ENCODE measurements at regions of chr16 and their contacts with region 1.

Region 1: DNA sequence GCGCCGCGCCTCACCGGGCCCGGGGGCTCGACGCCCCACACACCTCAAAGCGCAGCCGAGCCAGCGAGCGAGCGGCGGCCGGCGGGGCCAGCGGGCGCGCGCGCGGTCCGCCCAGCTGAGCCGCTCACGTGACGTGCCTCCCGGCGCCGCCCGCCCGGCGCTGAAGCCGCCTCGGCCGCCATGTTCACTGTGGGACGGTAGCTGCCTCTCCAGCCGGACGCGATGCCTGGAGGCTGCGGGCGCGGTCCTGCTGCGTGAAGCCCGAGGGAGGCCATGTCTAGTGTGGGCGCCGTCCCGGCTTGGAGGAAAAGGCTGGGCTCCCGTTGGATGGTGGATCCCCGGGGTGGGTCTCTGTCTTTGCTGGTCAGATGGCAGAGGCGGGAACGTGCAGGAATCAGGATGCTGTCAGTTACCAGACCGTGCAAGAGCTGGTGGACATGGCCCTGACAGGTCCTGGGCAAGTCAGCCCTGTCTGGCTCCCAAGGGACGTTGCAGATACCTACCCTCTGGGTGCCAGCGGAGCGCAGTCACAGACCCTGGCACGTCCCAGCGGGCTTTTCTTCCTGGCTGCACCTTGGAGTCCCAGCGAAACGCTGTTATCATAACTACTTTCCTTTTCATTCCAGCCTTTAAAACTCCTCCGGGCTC is at the start of gene USP31:
- DNase-seq: peak; percentile 98
- H3K4me3 Mint-ChIP-seq: peak within 1 kb of the TSS; percentile 95
- H3K27ac Mint-ChIP-seq: peak within 1 kb of the TSS; percentile 96
- H3K4me1 Mint-ChIP-seq: peaks cover 32% of the 10 kb centered on the region
- H3K27me3 Mint-ChIP-seq: peaks cover 22% of the 10 kb centered on the region
- CTCF ChIP-seq: no peak
- total RNA-seq, gene USP31: 19.4 and 23.6 TPM in 2 replicates

Region 2: GRCh38 chr16:23081675-23082119 is 67.8 kb before region 1 on chr16:
- CTCF ChIA-PET with region 1: no interaction called
- intact Hi-C with region 1: loop called (anchors 10 kb)
- DNase-seq: no peak
- H3K4me3 Mint-ChIP-seq: no peak overlapping the region
- H3K27ac Mint-ChIP-seq: no peak overlapping the region
- H3K4me1 Mint-ChIP-seq: peaks cover 16% of the 10 kb centered on the region
- H3K27me3 Mint-ChIP-seq: no peaks in the 10 kb centered on the region
- CTCF ChIP-seq: no peak